MCF 10A (cell line): ENCODE measurements at regions of chr11 and their contacts with region 1.

Region 1: DNA sequence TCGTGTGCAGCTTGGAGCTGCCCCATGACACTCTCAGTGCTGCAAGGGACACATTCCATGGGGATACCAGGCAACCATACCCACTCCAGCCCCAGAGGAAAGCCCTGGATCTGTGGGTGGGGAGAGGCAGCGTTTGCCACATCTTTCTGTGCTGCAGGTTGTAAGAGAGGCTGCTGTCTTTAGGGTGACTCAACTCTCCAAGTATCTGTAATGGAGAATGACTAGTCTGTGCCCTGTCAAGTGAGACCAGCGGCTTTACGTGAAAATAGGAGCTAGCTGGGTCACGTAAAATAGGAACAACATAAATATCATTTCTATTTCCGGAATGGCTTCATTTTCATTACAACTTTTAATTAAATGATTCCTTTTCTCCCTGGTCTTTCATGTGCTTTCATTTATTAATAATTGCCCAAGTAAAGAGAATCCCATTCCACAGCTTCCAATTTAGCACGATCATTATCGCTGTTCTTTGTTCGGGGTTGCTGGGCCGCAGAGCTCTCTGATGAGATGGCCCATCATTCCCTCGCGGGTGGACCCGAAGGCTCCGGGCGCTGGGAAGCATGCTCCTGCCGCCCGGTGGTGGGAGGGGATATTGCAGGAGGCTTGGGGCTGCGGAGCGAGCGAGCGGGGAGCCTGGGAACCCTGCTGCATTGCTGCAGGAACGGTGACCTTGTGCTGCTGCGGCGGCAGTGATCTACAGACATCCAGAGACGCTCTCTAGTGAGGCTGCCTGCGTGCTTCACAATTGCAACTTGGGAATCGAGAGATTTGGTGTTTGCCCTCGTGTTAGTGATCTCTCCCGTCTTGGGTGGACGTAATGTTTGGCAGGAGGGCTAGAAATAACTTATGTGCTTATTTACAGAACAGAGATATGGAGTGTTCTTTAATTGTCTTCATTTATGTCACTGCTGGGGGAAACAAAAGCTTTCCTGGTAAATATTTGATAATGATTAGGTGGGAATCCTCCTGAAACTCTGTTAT is 10.6 kb downstream of the SLC6A5 start:
- DNase-seq: peak; percentile 82
- H3K4me3 Mint-ChIP-seq: peak overlapping the region; percentile 56
- H3K27ac Mint-ChIP-seq: no peak overlapping the region
- H3K4me1 Mint-ChIP-seq: peaks cover 7% of the 10 kb centered on the region
- H3K27me3 Mint-ChIP-seq: peaks cover 75% of the 10 kb centered on the region
- CTCF ChIP-seq: peak; percentile 95

Region 2: GRCh38 chr11:20243974-20244373 is 366.0 kb before region 1 on chr11:
- CTCF ChIA-PET with region 1: interaction called, 3 read pairs
- POLR2A ChIA-PET with region 1: no interaction called
- intact Hi-C with region 1: loop called (anchors 5 kb)
- DNase-seq: peak; percentile 16
- H3K4me3 Mint-ChIP-seq: no peak overlapping the region
- H3K27ac Mint-ChIP-seq: no peak overlapping the region
- H3K4me1 Mint-ChIP-seq: no peaks in the 10 kb centered on the region
- H3K27me3 Mint-ChIP-seq: peaks cover 80% of the 10 kb centered on the region
- CTCF ChIP-seq: peak; percentile 30

Region 3: GRCh38 chr11:20397281-20397680 is 212.7 kb before region 1 on chr11:
- CTCF ChIA-PET with region 1: interaction called, 121 read pairs
- POLR2A ChIA-PET with region 1: interaction called, 9 read pairs
- intact Hi-C with region 1: loop called (anchors 1 kb)
- DNase-seq: peak; percentile 53
- H3K4me3 Mint-ChIP-seq: no peak overlapping the region
- H3K27ac Mint-ChIP-seq: no peak overlapping the region
- H3K4me1 Mint-ChIP-seq: no peaks in the 10 kb centered on the region
- H3K27me3 Mint-ChIP-seq: no peaks in the 10 kb centered on the region
- CTCF ChIP-seq: peak; percentile 39

Region 4: GRCh38 chr11:20415432-20415831 is 194.6 kb before region 1 on chr11:
- CTCF ChIA-PET with region 1: interaction called, 13 read pairs
- POLR2A ChIA-PET with region 1: no interaction called
- intact Hi-C with region 1: no loop called
- DNase-seq: no peak
- H3K4me3 Mint-ChIP-seq: no peak overlapping the region
- H3K27ac Mint-ChIP-seq: no peak overlapping the region
- H3K4me1 Mint-ChIP-seq: no peaks in the 10 kb centered on the region
- H3K27me3 Mint-ChIP-seq: no peaks in the 10 kb centered on the region
- CTCF ChIP-seq: no peak

Region 5: DNA sequence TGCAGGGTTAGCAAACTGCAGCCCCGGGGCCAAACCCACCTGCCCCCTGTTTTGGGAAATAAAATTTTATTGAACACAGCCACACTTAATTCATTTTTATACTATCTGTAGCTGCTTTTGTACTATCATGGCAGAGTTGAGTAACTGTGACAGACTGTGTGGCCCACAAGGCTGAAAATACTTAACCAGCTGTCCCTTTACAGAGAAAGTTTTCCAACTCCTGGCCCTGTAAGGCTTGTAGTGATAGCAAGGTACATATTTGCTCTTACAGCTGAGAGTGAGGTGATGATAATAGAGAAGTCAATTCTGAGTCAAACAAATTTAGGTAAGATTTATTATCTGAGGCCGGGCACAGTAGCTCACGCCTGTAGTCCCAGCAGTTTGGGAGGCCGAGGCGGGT is 98.0 kb before region 1 on chr11:
- CTCF ChIA-PET with region 1: interaction called, 10 read pairs
- POLR2A ChIA-PET with region 1: no interaction called
- intact Hi-C with region 1: no loop called
- DNase-seq: no peak
- H3K4me3 Mint-ChIP-seq: no peak overlapping the region
- H3K27ac Mint-ChIP-seq: no peak overlapping the region
- H3K4me1 Mint-ChIP-seq: no peaks in the 10 kb centered on the region
- H3K27me3 Mint-ChIP-seq: no peaks in the 10 kb centered on the region
- CTCF ChIP-seq: no peak

Region 6: GRCh38 chr11:20854215-20854955 is 244.4 kb after region 1 on chr11:
- CTCF ChIA-PET with region 1: no interaction called
- POLR2A ChIA-PET with region 1: no interaction called
- intact Hi-C with region 1: no loop called
- DNase-seq: no peak
- H3K4me3 Mint-ChIP-seq: no peak overlapping the region
- H3K27ac Mint-ChIP-seq: no peak overlapping the region
- H3K4me1 Mint-ChIP-seq: no peaks in the 10 kb centered on the region
- H3K27me3 Mint-ChIP-seq: no peaks in the 10 kb centered on the region
- CTCF ChIP-seq: no peak